ENCODE measurements at regions of chr1 and their contacts with region 1.

Region 1: DNA sequence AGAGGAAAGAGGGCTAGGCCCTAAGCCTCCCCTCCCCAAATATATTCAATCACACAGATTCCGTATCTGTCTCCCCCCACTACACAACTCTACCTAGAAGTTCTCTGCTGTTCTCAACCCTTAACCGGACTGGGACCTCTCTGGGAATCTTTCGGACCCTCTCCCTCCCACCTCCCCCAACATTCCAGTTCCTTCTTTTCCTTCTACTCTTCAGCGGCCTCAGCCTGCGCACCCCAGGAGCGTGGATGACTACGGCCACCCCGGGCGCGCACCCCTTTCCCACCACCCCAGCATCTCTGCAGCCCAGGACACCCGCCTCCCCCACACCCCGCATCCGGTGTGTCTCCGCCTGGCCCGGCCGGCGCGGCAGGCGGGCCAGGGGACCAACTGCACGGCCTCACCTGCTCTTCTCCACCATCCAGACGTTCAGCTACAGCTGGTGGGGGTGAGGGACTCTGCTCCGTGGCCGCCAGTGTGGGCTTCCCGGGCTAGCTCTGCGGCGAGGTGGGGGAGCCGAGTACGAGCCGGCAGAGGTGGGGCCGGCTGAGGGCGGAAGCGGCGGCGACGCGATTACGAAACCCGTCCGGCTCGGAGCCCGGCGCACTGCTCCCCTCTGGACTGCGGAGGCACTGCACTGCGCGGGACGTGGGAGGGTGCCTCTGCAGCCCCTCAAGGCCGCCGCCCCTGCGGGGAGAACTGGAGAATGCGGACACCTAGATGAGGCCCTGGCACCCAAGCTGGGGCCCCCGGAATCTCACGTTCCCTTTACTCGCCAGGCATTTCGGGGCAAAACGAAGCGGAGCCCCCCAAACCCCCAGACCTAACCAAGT is at the start of gene CDC42SE1:
- DNase-seq: peak; percentile 94
- H3K4me3 ChIP-seq: peak within 1 kb of the TSS; percentile 92
- H3K27ac ChIP-seq: peak within 1 kb of the TSS; percentile 68
- H3K4me1 ChIP-seq: peaks cover 38% of the 10 kb centered on the region
- CTCF ChIP-seq: peak; percentile 80
- total RNA-seq, gene CDC42SE1: 44.1 and 48.2 TPM in 2 replicates

Region 2: GRCh38 chr1:151008190-151008860 is 51.0 kb before region 1 on chr1 and contains the start of gene PRUNE1:
- CTCF ChIA-PET with region 1: no interaction called
- POLR2A ChIA-PET with region 1: interaction called, 3 read pairs
- intact Hi-C with region 1: loop called (anchors 5 kb)
- DNase-seq: peak; percentile 97
- H3K4me3 ChIP-seq: peak within 1 kb of the TSS; percentile 83
- H3K27ac ChIP-seq: peak within 1 kb of the TSS; percentile 47
- H3K4me1 ChIP-seq: peaks cover 54% of the 10 kb centered on the region
- CTCF ChIP-seq: no peak
- total RNA-seq, gene PRUNE1: 15.4 and 18.8 TPM in 2 replicates